Testis (tissue), 5 donors: ENCODE measurements at regions of chr22 and their contacts with region 1.

Region 1: GRCh38 chr22:37162221-37163095 is 12.7 kb upstream of the IL2RB start:
- DNase-seq: no peak
- H3K4me3 ChIP-seq: peak overlapping the region in 1 of 2 donors; percentile 4
- H3K27ac ChIP-seq: no peak overlapping the region
- H3K4me1 ChIP-seq: peaks cover 6% of the 10 kb centered on the region
- H3K27me3 ChIP-seq: no peaks in the 10 kb centered on the region
- CTCF ChIP-seq: no peak
- POLR2A ChIP-seq: no peak

Region 2: GRCh38 chr22:37019309-37020125 is 142.9 kb before region 1 on chr22 and contains the starts of genes MPST and TST:
- intact Hi-C with region 1: no loop called
- DNase-seq: peak; percentile 82
- H3K4me3 ChIP-seq: peak within 1 kb of the TSS; percentile 84 to 95
- H3K27ac ChIP-seq: peak within 1 kb of the TSS; percentile 77 to 88
- H3K4me1 ChIP-seq: peaks cover 18% of the 10 kb centered on the region
- H3K27me3 ChIP-seq: no peaks in the 10 kb centered on the region
- CTCF ChIP-seq: peak; percentile 19 to 81 (median 27)
- POLR2A ChIP-seq: peak; percentile 9
- total RNA-seq, gene MPST: 99.6 to 114 TPM
- total RNA-seq, gene TST: 18.0 to 20.9 TPM

Region 3: GRCh38 chr22:37199760-37200108 is 37.3 kb after region 1 on chr22:
- intact Hi-C with region 1: loop called (anchors 5 kb)
- DNase-seq: no peak
- H3K4me3 ChIP-seq: peak overlapping the region; percentile 7 to 63
- H3K27ac ChIP-seq: peak overlapping the region; percentile 12 to 18
- H3K4me1 ChIP-seq: peaks cover 31% of the 10 kb centered on the region
- H3K27me3 ChIP-seq: no peaks in the 10 kb centered on the region
- CTCF ChIP-seq: no peak
- POLR2A ChIP-seq: no peak